GM12878 (cell line): ENCODE measurements at regions of chr4 and their contacts with region 1.

Region 1: DNA sequence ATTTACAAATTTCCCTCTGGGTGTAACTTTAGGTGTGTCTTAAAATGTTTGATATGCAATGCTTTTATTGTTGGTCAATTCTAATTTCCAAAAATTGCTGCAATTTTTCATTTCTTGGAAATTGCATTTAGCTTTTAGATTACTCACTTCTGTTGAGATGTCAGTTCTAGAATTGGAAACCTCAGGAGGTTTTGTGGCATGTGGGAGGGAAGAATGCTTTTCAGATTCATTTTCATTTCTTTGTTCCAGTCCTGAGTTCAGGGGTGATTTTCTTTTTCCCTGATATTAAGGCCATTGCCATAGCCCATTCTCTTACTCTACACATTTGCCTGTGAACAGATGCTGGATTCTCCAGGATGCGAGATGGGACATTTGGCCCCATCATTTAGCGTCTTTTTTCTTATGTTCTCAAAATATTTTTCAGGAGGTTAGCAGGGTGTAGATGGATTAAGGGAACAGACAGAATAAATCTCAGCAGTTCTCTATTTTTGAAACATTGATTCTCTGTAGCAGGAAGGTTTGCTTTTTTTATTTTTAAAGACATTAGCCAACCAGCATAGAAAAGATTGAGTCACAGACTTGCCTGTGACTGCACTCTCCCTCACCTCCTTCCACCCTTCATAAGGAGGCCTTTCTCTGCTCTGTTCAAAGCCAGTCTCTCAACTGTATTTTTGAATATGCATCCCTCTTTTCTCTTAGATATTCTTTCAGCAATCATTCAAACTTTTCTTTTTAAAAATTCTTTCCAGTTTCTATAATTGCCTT is 238.4 kb upstream of the ANXA3 start:
- DNase-seq: no peak
- ATAC-seq: peak; percentile 57
- H3K4me3 ChIP-seq: no peak overlapping the region
- H3K27ac ChIP-seq: no peak overlapping the region
- H3K4me1 ChIP-seq: no peaks in the 10 kb centered on the region
- H3K27me3 ChIP-seq: no peaks in the 10 kb centered on the region
- CTCF ChIP-seq: no peak
- EP300 ChIP-seq: no peak
- POLR2A ChIP-seq: no peak
- RAD21 ChIP-seq: no peak

Region 2: DNA sequence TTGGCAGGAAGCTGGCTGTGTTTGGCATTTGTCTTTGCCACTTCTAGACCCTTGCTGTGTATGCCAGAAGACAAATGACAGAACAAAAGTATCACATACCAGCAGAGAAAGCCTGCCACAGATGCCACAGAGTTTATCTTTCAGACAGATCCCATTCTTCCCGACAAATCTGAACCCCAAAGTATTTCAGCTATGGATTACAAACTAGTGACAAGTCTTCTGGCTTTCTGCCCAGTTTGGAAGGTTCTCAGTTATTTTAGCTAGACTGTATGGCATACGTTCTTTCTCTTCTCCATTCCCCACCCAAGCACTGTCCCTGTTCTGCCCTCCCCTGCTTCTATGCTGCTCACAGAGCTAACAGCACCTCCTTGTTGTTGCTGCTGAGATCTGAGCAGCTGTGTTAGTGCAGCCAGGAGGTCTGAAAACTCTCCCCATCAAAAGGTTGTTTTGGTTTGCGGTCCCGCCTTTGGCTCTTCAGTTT is 19.3 kb before region 1 on chr4:
- CTCF ChIA-PET with region 1: interaction called, 5 read pairs
- POLR2A ChIA-PET with region 1: no interaction called
- RAD21 ChIA-PET with region 1: no interaction called
- SMC1A ChIA-PET with region 1: interaction called, 29 read pairs
- in situ Hi-C with region 1: no loop called
- intact Hi-C with region 1: no loop called
- DNase-seq: no peak
- ATAC-seq: no peak
- H3K4me3 ChIP-seq: no peak overlapping the region
- H3K27ac ChIP-seq: no peak overlapping the region
- H3K4me1 ChIP-seq: peaks cover 8% of the 10 kb centered on the region; the same call in 1 of the 2 replicates
- H3K27me3 ChIP-seq: no peaks in the 10 kb centered on the region
- CTCF ChIP-seq: no peak
- EP300 ChIP-seq: no peak
- POLR2A ChIP-seq: no peak
- RAD21 ChIP-seq: no peak